ENCODE measurements at regions of chr1 and their contacts with region 1.

Region 1: GRCh38 chr1:47437447-47438164 is at the start of gene FOXD2:
- DNase-seq: no peak
- H3K4me3 ChIP-seq: peak within 1 kb of the TSS; percentile 79
- CTCF ChIP-seq: peak; percentile 57

Region 2: GRCh38 chr1:47179017-47179987 is 258.3 kb before region 1 on chr1:
- CTCF ChIA-PET with region 1: interaction called, 16 read pairs
- POLR2A ChIA-PET with region 1: interaction called, 3 read pairs
- DNase-seq: peak; percentile 72
- H3K4me3 ChIP-seq: peak overlapping the region; percentile 60
- CTCF ChIP-seq: peak; percentile 97

Region 3: GRCh38 chr1:47388891-47389238 is 48.7 kb before region 1 on chr1:
- CTCF ChIA-PET with region 1: interaction called, 535 read pairs
- POLR2A ChIA-PET with region 1: interaction called, 3 read pairs
- DNase-seq: no peak
- H3K4me3 ChIP-seq: no peak overlapping the region
- CTCF ChIP-seq: peak; percentile 84

Region 4: GRCh38 chr1:47424336-47424982 is 13.1 kb before region 1 on chr1:
- CTCF ChIA-PET with region 1: interaction called, 82 read pairs
- POLR2A ChIA-PET with region 1: interaction called, 3 read pairs
- DNase-seq: no peak
- H3K4me3 ChIP-seq: no peak overlapping the region
- CTCF ChIP-seq: peak; percentile 67

Region 5: GRCh38 chr1:47459253-47459788 is 21.7 kb after region 1 on chr1:
- CTCF ChIA-PET with region 1: interaction called, 20 read pairs
- POLR2A ChIA-PET with region 1: no interaction called
- DNase-seq: no peak
- H3K4me3 ChIP-seq: no peak overlapping the region
- CTCF ChIP-seq: no peak

Region 6: DNA sequence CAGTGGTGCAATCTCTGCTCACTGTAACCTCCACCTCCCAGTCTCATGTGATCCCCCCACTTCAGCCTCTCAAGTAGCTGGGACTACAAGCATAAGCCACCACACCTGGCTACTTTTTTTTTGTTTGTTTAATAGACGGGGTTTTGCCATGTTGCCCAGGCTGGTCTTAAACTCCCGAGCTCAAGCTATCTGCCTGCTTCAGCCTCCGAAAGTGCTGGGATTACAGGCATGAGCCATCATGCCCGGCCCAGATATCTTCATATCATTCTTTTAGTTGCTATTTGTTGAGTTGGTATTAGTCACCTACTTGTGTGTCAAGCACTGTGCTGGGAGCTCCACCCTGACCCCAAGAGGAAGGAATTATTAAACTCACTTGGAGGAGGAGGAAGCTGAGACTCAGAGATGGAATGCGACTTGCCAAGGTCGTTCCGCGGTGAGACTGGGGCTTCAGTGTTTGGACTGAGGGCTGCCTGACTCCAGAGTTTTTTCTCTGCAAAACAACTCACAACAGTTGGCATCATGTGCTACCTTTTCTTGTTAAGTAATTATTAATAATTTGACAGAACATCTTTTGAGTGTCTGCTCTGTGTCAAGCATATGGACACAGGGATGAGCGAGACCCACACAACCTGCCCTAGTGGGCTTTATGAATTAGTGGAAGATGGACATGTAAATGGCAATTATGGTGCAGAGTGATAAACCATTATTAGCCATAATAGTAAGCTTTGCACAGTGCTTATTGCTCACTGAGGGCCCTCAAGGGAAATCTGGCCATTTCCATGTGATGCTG is 132.3 kb after region 1 on chr1:
- CTCF ChIA-PET with region 1: interaction called, 25 read pairs
- POLR2A ChIA-PET with region 1: no interaction called
- DNase-seq: peak; percentile 85
- H3K4me3 ChIP-seq: no peak overlapping the region
- CTCF ChIP-seq: peak; percentile 63

Region 7: DNA sequence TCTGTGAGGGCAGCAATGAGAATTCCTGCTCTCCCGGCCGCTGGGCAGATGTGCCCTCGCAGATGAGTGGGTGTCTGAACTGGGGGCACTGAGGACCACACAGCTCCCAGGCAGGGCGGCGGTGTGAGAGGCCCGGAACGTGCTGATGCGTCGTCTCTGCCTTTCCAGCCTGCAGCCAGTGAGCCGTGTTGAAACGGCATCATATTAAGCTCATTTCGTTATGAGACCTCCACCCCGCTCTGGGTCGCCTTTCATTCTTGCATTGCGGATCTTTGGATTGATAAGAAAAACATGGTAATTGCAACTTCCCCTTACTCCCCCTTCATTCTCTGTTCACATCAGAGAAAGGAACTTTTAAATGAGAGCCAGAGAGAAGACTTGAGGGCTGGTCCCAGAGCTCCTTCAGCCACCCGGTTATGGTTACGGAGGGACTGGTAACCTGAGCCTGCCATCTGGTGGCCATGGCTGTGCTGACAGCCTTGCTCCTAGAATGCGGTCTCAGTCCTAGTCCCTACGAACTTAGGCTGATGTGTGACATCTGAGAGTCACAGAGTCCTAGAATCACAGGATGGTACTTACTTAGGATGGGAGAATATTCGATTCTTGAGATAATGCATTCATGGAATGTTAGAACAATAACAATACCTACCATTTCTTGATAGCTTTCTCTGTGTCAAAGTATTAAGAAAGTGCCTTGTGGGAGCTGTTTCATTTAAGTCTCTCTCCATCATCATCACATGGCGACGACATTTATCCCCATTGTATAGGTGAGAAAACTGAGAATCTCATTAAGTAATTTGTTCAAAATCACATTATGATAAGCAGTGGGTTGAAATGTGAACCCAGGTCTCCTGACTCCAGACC is 288.6 kb after region 1 on chr1:
- CTCF ChIA-PET with region 1: interaction called, 266 read pairs
- POLR2A ChIA-PET with region 1: no interaction called
- DNase-seq: no peak
- H3K4me3 ChIP-seq: no peak overlapping the region
- CTCF ChIP-seq: peak; percentile 93

Measured in AG04449 (cell line).